Activated CD4-positive, alpha-beta memory T cell treated with anti-CD3 and anti-CD28 coated beads for 36 hours (primary cell): ENCODE measurements at regions of chr4 and their contacts with region 1.

Region 1: DNA sequence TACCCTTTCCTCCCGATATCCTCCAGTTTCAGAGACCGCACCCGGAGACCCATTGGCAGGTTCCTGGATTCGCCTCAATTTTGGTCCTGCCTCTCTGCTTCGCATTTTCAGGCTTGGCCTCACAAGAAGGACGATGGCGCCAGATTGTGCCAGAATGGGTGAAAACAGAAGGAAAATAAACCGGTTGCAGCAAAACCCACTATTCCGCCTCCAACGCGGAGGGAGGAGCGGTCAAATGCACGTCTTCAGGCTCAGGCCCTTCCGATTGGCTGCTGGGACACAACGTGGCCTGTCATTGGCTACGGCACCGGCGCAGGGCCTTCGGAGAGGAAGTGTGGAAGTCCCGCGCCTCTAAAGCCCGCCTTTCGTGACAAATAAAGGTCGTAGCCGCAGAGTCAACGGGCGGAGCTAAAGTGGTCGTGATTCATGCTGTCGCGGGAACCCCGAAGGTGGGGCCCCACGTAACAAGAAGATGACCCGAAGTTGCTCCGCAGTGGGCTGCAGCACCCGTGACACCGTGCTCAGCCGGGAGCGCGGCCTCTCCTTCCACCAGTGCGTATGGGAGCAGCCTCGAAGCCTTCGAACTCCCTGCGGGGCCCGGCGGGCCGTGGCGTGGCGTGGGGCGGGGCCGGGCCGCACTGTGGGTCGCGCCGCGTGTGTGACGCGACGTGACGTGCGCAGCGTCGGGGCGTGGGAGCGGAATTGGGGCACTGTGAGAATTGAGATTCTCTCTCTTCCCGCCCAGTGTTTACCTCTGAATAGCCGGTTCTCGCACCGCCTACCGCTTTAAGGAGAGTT is at the start of gene THAP9:
- DNase-seq: peak; percentile 99
- H3K4me3 Mint-ChIP-seq: no peak within 1 kb of the TSS
- H3K27ac Mint-ChIP-seq: no peak within 1 kb of the TSS
- H3K4me1 Mint-ChIP-seq: peaks cover 36% of the 10 kb centered on the region
- H3K27me3 Mint-ChIP-seq: no peaks in the 10 kb centered on the region
- total RNA-seq, gene THAP9: 2.3 to 2.4 TPM

Region 2: DNA sequence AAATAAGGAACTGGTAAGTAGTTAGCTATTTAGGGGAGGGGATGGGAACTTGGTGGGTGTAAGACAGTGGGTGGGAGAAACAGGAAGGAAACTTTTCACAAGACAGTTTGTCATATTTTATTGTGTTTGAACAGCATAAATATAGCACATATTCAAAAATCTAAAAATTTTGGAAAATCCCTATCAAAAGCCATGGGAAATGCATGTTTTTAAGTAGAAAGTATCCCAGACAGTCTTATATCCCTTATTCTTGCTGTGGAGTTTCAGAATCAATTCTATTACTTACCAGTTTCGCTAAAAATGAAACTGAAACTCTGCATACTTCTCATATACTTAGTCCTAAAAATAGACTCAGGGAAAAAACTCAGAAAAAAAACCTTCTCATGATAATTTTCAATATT is 1406.5 kb before region 1 on chr4:
- CTCF ChIA-PET with region 1: no interaction called
- POLR2A ChIA-PET with region 1: no interaction called
- intact Hi-C with region 1: loop called (anchors 10 kb)
- DNase-seq: no peak
- H3K4me3 Mint-ChIP-seq: no peak overlapping the region
- H3K27ac Mint-ChIP-seq: peak overlapping the region; percentile 64
- H3K4me1 Mint-ChIP-seq: peaks cover 47% of the 10 kb centered on the region
- H3K27me3 Mint-ChIP-seq: no peaks in the 10 kb centered on the region

Region 3: GRCh38 chr4:82428969-82429727 is 471.4 kb before region 1 on chr4:
- CTCF ChIA-PET with region 1: no interaction called
- POLR2A ChIA-PET with region 1: interaction called, 5 read pairs
- intact Hi-C with region 1: loop called (anchors 1 kb)
- DNase-seq: peak; percentile 95
- H3K4me3 Mint-ChIP-seq: peak overlapping the region; percentile 99
- H3K27ac Mint-ChIP-seq: peak overlapping the region; percentile 97
- H3K4me1 Mint-ChIP-seq: peaks cover 60% of the 10 kb centered on the region
- H3K27me3 Mint-ChIP-seq: no peaks in the 10 kb centered on the region

Region 4: DNA sequence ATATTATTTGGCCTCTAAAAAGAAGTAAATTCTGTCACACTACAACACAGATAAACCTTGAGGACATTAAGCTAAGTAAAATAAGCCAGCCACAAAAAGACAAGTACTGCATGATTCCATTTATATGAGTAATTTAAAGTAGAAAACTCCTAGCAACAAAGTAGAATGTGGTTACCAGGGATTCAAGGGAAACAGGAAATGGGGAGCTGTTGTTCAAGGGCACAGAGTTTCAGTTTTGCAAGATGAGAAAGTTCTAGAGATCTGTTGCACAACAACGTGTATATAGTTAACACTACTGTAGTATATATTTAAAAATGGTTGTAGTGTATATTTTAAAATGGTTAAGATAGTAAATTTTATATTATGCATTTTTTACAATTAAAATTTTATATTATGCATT is 34.9 kb before region 1 on chr4:
- CTCF ChIA-PET with region 1: no interaction called
- POLR2A ChIA-PET with region 1: no interaction called
- intact Hi-C with region 1: loop called (anchors 1 kb)
- DNase-seq: peak; percentile 20
- H3K4me3 Mint-ChIP-seq: no peak overlapping the region
- H3K27ac Mint-ChIP-seq: peak overlapping the region; percentile 69
- H3K4me1 Mint-ChIP-seq: peaks cover 25% of the 10 kb centered on the region
- H3K27me3 Mint-ChIP-seq: no peaks in the 10 kb centered on the region

Region 5: GRCh38 chr4:83034630-83035494 is 134.3 kb after region 1 on chr4 and contains the start of gene COPS4:
- CTCF ChIA-PET with region 1: interaction called, 11 read pairs
- POLR2A ChIA-PET with region 1: interaction called, 5 read pairs
- intact Hi-C with region 1: loop called (anchors 1 kb)
- DNase-seq: peak; percentile 97
- H3K4me3 Mint-ChIP-seq: peak within 1 kb of the TSS; percentile 85
- H3K27ac Mint-ChIP-seq: peak within 1 kb of the TSS; percentile 98
- H3K4me1 Mint-ChIP-seq: peaks cover 28% of the 10 kb centered on the region
- H3K27me3 Mint-ChIP-seq: no peaks in the 10 kb centered on the region
- total RNA-seq, gene COPS4: 38.5 to 40.6 TPM

Region 6: DNA sequence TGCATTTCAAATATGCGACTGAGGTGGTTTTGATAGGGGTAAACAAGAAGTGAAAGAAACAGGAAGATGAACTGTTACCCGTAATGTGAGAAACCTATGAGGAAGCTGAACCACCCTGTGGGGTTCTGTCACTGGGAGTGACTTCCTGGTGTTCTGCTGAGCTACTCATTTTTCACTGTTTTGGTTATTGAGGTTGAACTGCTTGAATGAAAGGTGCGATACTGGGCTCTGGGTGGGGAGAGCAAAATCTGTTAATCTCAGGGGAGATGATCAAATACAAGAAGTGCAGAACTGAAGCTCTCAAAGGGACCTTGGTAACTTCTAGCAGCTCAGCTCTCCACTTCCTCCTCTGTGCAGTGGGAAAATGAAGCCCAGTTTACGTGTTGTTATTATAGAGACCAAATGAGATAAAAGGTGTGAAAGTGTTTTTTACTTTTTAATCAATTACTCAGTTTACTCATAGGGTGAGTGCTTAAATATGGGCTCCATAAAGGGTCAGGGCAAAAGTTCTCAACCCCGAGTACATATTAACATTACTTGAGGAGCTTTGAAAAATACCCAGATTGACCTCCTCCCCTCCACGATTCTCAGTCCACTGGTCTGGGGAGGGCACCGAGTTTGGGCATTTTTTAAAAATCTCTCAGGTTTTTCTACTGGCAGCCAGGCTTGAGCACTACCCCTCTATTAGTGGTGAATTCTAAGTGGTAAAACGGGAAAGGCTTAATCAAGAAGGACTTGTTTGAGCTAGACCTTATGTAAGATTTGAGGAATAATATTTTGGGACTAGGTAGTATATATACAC is 317.4 kb after region 1 on chr4:
- CTCF ChIA-PET with region 1: no interaction called
- POLR2A ChIA-PET with region 1: interaction called, 4 read pairs
- intact Hi-C with region 1: loop called (anchors 1 kb)
- DNase-seq: peak; percentile 76
- H3K4me3 Mint-ChIP-seq: peak overlapping the region; percentile 22
- H3K27ac Mint-ChIP-seq: peak overlapping the region; percentile 52
- H3K4me1 Mint-ChIP-seq: peaks cover 60% of the 10 kb centered on the region
- H3K27me3 Mint-ChIP-seq: peaks cover 5% of the 10 kb centered on the region

Region 7: GRCh38 chr4:83356899-83357661 is 456.6 kb after region 1 on chr4:
- CTCF ChIA-PET with region 1: no interaction called
- POLR2A ChIA-PET with region 1: interaction called, 4 read pairs
- intact Hi-C with region 1: loop called (anchors 1 kb)
- DNase-seq: peak; percentile 65
- H3K4me3 Mint-ChIP-seq: peak overlapping the region; percentile 41
- H3K27ac Mint-ChIP-seq: peak overlapping the region; percentile 86
- H3K4me1 Mint-ChIP-seq: peaks cover 17% of the 10 kb centered on the region
- H3K27me3 Mint-ChIP-seq: no peaks in the 10 kb centered on the region